ENCODE measurements at regions of chr4 and their contacts with region 1.

Region 1: DNA sequence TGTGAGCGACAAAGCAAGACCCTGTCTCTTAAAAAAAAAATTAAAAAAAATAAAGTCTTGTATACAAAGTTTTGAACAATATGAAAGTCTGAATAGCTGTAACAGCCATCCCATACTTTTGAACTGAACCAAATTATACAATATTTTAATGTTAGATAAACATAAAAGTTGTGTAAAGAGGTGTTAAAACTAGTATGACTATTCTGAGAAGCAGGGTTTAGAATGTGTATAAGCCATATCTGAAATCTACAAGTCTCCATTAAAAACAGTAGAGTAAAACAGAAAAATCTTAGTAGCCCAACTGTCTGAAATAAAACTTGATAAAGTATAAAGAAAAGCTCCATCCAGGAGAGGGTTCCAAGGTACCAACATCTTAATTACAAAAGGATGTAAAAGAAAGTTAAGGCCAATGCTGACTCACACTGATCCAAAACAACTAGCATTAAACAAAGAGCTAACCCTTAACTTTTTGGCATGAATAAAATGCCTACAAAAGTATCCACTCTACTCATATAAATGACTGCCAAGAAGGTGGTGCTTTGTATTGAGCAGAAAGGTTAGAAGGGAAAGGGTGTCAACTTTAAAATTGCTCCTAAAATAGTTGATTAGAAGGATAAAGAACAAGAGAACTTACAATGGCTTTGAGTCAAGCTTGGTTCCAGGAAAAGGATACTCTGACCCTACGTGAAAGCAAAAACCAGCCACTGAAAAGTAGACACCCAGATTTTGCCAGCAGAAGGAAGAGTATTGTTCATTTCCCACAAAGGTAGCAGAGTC is 18.5 kb downstream of the CNOT6L start:
- DNase-seq: no peak
- ATAC-seq: peak; percentile 69
- H3K4me3 Mint-ChIP-seq: peak overlapping the region; percentile 65
- H3K27ac Mint-ChIP-seq: peak overlapping the region; percentile 90
- H3K4me1 Mint-ChIP-seq: peaks cover 71% of the 10 kb centered on the region
- H3K27me3 Mint-ChIP-seq: no peaks in the 10 kb centered on the region
- CTCF ChIP-seq: no peak

Region 2: DNA sequence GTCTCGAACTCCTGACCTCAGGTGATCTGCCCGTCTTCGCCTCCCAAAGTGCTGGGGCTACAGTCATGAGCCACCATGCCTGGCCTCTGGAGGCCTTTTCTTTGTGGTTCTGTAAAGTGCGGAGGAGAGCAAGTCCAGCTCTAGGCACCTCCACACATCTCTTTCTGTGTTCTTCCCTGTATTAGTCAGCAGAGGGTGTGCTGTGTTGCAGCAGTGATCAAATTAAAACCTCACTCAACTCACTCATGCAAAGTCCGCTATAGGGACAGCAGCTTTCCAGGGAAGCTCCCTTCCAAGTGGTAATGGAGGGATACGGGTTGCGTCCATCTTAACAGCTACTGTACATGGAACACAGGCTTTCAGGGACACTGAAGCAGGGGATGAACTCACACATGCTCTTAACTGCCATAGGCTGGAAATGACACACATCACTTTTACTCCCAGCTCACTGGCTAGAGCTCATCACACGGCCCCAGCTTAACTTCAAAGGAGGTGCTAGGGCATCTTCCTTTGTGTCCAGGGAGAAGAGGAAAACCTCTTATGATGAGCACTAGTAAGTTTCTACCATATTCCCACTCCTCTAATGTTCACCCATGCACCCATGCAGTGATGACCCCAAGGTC is 679.7 kb before region 1 on chr4:
- CTCF ChIA-PET with region 1: no interaction called
- POLR2A ChIA-PET with region 1: no interaction called
- intact Hi-C with region 1: no loop called
- DNase-seq: no peak
- ATAC-seq: no peak
- H3K4me3 Mint-ChIP-seq: no peak overlapping the region
- H3K27ac Mint-ChIP-seq: no peak overlapping the region
- H3K4me1 Mint-ChIP-seq: no peaks in the 10 kb centered on the region
- H3K27me3 Mint-ChIP-seq: no peaks in the 10 kb centered on the region
- CTCF ChIP-seq: no peak

Region 3: DNA sequence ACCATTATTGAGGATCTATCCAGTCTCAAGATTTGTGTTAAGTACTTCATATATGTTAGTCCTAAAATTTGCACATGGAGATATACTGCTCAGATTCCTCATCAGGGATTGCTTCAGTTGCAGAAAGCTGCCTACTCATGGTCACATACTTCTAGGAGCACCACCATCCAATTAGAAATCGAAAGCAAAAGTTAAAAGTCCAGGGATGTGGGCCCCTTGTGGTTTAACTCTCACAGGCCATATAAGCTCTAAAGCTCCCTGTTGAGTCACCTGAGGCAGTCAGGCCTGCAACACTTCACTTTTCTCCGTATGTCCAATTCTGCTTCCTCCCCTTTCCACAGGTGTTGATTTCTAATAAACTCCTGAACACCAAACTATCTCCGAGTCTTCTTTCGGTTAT is 65.7 kb before region 1 on chr4:
- CTCF ChIA-PET with region 1: no interaction called
- POLR2A ChIA-PET with region 1: no interaction called
- intact Hi-C with region 1: loop called (anchors 5 kb)
- DNase-seq: peak; percentile 67
- ATAC-seq: peak; percentile 95
- H3K4me3 Mint-ChIP-seq: peak overlapping the region; percentile 67
- H3K27ac Mint-ChIP-seq: peak overlapping the region; percentile 84
- H3K4me1 Mint-ChIP-seq: peaks cover 60% of the 10 kb centered on the region
- H3K27me3 Mint-ChIP-seq: no peaks in the 10 kb centered on the region
- CTCF ChIP-seq: no peak

Region 4: GRCh38 chr4:77843628-77844027 is 43.0 kb after region 1 on chr4:
- CTCF ChIA-PET with region 1: no interaction called
- POLR2A ChIA-PET with region 1: no interaction called
- intact Hi-C with region 1: no loop called
- DNase-seq: no peak
- ATAC-seq: peak; percentile 85
- H3K4me3 Mint-ChIP-seq: peak overlapping the region; percentile 0
- H3K27ac Mint-ChIP-seq: peak overlapping the region; percentile 53
- H3K4me1 Mint-ChIP-seq: peaks cover 25% of the 10 kb centered on the region
- H3K27me3 Mint-ChIP-seq: no peaks in the 10 kb centered on the region
- CTCF ChIP-seq: no peak

Region 5: GRCh38 chr4:77862478-77863216 is 62.0 kb after region 1 on chr4 and contains the start of gene MRPL1:
- CTCF ChIA-PET with region 1: interaction called, 10 read pairs
- POLR2A ChIA-PET with region 1: interaction called, 19 read pairs
- intact Hi-C with region 1: no loop called
- DNase-seq: peak; percentile 92
- ATAC-seq: peak; percentile 79
- H3K4me3 Mint-ChIP-seq: peak within 1 kb of the TSS; percentile 99
- H3K27ac Mint-ChIP-seq: peak within 1 kb of the TSS; percentile 100
- H3K4me1 Mint-ChIP-seq: peaks cover 55% of the 10 kb centered on the region
- H3K27me3 Mint-ChIP-seq: peaks cover 3% of the 10 kb centered on the region
- CTCF ChIP-seq: peak; percentile 40
- total RNA-seq, gene MRPL1: 55.7 to 62.4 TPM

Measured in activated CD8-positive, alpha-beta T cell treated with anti-CD3 and anti-CD28 coated beads for 36 hours (primary cell).